Right ventricle myocardium inferior (tissue), 1 donor: ENCODE measurements at regions of chr5 and their contacts with region 1.

Region 1: DNA sequence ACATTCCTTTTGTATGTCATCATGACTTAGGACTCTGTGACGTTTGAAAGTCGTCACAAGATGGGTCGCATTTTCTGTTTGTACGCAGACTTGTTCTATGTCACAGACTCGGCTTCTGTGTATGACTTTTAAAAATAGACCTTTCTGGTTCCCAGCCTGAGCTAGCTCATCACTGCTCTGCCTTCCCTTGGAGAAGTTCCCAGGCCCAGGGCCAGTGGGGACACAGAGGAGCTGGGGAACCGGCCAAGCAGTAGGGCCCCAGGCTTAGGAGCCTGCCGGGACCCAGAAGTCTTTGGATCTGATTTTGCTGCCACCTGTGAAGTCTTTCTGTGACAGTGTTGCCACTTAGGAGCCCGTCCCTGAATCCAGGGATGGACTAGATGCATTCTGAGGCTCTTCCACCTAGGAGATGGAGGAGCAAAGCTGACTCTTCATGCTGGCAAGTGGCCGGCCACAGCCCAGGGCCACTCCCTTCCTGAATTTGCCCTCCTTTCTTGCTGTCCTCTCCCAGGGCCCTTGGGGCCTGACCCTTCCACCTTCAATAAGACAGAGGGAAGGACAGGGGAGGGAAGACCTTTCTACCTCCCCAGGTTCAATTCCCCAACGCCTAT is 18.1 kb upstream of the UBE2QL1 start:
- DNase-seq: peak; percentile 78
- ATAC-seq: peak; percentile 89

Region 2: DNA sequence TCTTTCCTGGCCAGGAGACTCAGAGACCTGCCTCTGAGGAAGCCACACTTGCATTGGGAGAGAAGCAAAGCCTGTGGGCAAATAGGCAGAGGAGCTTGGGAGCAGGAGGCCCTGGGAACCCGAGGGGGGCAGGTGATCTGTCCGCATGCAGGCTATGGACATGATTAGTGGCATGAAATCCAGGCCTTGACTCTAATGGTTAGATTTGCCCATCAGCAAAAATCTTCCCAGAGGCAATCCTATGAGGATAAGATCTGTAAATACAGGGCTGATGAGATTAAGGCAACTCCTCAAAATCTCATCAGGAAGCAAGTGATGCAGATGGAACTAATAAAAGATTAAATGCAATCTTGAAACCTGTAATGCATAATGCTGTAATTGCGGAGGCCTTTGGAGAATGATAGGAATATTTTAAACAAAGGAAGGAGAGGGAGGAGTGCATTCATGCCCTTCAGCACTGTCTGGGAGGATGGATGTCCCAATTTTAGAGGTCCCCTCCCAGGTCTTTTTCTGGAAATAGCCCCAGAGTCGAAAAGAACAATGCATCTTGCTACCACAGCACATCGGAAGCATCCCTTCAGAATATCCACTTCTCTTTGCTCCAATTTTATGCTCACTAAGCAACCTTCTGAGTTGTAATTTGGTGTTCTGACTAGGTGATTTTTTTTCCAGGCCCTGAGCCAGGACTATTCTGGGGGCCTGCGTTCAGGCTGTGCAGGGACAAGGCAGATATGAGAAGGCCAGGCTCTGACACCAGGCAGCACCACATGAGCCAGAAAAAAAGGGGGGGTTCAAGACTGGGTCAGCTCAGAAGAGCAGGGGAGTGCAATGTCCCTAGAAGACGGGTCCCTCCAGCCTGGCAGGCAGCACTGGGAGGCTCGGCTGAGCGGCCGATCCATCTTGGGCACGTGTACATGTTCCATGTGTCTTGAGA is 118.7 kb before region 1 on chr5:
- intact Hi-C with region 1: loop called (anchors 5 kb)
- DNase-seq: no peak
- ATAC-seq: peak; percentile 85

Region 3: GRCh38 chr5:7039074-7039473 is 608.6 kb after region 1 on chr5:
- intact Hi-C with region 1: no loop called
- DNase-seq: no peak
- ATAC-seq: no peak